Activated CD4-positive, alpha-beta T cell treated with anti-CD3 and anti-CD28 coated beads, Interleukin-2, amount 10 ng/mL, durations not matched to agents 7 days and 5 days (primary cell): ENCODE measurements at regions of chr10 and their contacts with region 1.

Region 1: DNA sequence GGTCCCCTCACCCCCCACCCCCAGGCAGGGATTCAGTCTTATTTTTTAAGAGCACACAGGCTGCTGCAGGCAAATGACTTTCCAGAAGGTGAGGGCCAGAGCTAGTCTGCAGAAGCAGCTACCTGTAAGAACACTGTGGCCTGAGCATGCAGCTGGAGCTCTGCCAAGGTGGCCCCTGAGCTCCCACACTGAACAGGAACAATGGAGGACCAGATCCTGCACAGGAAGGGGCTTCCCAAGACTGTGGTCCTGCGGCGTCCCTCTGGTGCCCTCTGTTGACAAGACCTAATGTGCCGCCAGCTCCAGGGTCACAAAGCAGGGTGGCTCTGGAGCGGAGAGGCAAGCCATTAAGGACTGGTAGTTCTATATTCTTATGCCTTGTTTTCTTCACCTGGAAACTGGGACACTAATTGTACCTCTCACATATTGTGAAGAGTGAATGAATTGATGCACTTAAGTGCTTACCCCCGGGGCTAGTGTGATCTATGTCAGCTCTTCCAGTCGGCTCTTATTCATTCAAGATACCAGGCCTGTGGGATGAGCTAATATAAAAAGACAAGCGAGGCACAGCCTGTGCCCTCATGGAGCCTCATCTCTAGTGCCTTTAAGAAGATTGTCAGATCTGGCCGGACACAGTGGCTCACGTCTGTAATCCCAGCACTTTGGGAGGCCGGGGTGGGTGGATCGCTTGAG is 8.0 kb upstream of the BEND7 start:
- DNase-seq: no peak
- H3K4me3 Mint-ChIP-seq: no peak overlapping the region
- H3K27ac Mint-ChIP-seq: no peak overlapping the region
- H3K4me1 Mint-ChIP-seq: no peaks in the 10 kb centered on the region
- H3K27me3 Mint-ChIP-seq: peaks cover 31% of the 10 kb centered on the region

Region 2: GRCh38 chr10:13823096-13823708 is 286.4 kb after region 1 on chr10:
- CTCF ChIA-PET with region 1: no interaction called
- POLR2A ChIA-PET with region 1: interaction called, 10 read pairs
- DNase-seq: no peak
- H3K4me3 Mint-ChIP-seq: no peak overlapping the region
- H3K27ac Mint-ChIP-seq: no peak overlapping the region
- H3K4me1 Mint-ChIP-seq: peaks cover 16% of the 10 kb centered on the region
- H3K27me3 Mint-ChIP-seq: peaks cover 14% of the 10 kb centered on the region